HepG2 (cell line): ENCODE measurements at regions of chr6 and their contacts with region 1.

Region 1: DNA sequence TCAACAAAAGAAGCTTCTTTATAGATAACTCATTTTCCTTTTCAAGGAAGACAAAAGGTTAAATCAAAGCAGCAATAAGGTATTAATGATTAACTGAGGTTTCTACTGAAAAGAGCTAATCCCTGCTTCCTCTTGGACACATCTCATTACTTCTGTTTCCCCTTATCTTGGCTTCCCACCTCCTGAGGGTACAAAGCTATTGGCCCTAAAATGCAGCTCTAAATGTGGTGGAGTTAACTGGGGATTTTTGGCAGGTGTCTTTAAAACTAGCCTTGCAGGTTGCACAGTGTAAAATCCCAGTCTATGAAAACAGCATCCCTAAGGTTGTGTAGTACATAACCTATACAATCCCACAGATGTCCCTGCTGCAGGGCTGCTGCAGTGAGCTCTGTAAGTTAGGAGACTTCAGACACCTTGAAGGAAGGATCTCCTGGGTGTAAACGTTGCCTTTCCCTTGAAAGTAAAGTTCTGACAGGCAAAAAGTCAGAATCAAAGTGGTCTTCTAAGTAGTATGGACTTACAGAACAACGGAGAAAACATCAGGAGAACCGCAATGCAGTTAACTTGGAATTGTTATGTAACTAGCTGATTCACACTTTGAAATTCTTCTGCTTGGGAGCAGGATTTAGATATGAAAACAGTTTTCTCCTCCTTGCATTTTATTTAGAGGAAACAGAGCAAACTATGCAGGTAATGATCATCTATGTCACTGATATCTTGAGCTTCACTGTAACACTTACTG is 71.7 kb upstream of the TRAF3IP2 start:
- DNase-seq: peak; percentile 61
- ATAC-seq: peak; percentile 84
- H3K4me3 ChIP-seq: peak overlapping the region; percentile 12 to 43 (median 31); a peak in 4 of 6 replicates
- H3K27ac ChIP-seq: peak overlapping the region; percentile 51
- H3K4me1 ChIP-seq: peaks cover 66% of the 10 kb centered on the region
- H3K27me3 ChIP-seq: no peaks in the 10 kb centered on the region
- CTCF ChIP-seq: no peak
- EP300 ChIP-seq: peak in 1 of 2 experiments; percentile 38; a peak in 1 of 4 replicates
- POLR2A ChIP-seq: peak in 1 of 2 experiments; percentile 55; a peak in 1 of 4 replicates
- RAD21 ChIP-seq: no peak

Region 2: DNA sequence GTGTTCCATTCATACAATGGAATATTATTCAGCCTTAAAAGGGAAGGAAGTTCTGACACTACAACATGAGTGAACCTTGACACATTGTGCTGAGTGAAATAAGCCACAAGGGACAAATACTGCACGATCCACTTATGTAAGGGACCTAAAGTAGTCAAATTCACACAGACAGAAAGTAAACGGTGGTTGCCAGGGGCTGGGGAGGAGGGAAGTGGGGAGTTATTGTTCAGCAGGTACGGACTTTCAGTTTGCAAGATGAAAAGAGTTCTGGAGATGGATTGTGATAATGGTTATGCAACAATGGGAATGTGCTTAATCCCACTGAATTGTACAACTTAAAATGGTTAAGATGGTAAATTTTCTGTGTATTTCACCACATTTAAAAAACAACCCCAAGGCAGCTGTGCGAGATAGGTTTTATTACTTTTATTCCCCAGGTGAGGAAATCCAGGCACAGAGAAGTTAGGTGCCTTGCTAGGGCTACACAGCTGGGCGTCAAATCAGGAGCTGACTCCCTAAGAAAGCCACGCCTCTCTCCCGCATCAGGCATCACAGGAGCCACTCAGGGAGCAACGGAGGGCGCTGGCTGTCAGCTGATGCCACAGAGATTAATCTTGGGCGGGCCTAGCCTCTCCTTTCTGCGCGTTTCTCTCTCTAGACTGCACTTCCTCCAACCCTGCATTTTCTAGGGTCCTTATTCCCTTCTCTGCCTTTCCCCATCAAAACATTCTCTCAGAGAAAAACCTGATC is 62.4 kb before region 1 on chr6:
- CTCF ChIA-PET with region 1: no interaction called
- POLR2A ChIA-PET with region 1: no interaction called
- in situ Hi-C with region 1: no loop called
- intact Hi-C with region 1: loop called (anchors 5 kb)
- DNase-seq: peak; percentile 64
- ATAC-seq: peak; percentile 39
- H3K4me3 ChIP-seq: peak overlapping the region; percentile 22 to 51 (median 49)
- H3K27ac ChIP-seq: no peak overlapping the region
- H3K4me1 ChIP-seq: peaks cover 64% of the 10 kb centered on the region
- H3K27me3 ChIP-seq: no peaks in the 10 kb centered on the region; a peak in 1 of 5 replicates
- CTCF ChIP-seq: no peak
- EP300 ChIP-seq: no peak
- POLR2A ChIP-seq: no peak
- RAD21 ChIP-seq: no peak

Region 3: DNA sequence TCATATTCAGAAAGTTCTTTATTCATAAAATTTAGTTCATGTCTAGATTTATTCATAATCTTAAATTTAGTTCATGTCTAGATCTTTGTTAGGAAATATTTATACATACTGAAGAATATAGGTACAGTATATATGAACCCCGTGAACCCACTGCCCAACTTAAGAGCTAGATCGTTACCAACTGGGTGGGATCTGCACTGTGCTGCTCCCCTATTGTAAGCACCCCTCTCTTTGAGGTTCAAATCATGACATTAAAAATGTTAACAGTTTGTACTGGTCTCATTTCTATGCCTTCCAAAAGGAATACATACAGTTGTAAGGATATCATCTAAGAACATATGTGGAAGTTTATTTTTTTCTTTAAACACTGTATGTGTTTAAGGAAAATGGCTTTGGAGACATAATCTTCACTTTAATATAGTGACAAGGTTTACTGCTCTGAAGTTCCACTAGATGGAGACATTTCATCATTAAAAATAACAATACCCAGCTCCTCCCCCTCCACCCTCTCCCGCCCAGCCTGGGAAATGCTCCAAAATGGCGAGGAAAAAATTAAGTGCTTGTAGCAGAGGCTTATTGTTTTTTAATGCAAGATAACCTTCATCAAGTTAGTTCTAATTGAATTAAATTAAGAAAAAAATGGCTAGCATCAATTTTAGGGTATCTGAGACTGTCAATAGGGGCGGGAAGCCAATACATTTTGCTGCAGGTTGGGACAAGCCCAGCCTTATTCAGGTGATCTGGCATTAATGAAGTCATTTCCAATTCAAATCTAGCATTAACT is 32.4 kb after region 1 on chr6:
- CTCF ChIA-PET with region 1: no interaction called
- POLR2A ChIA-PET with region 1: no interaction called
- in situ Hi-C with region 1: no loop called
- intact Hi-C with region 1: no loop called
- DNase-seq: peak; percentile 68
- ATAC-seq: peak; percentile 97
- H3K4me3 ChIP-seq: no peak overlapping the region
- H3K27ac ChIP-seq: no peak overlapping the region
- H3K4me1 ChIP-seq: no peaks in the 10 kb centered on the region
- H3K27me3 ChIP-seq: no peaks in the 10 kb centered on the region
- CTCF ChIP-seq: peak; percentile 77
- EP300 ChIP-seq: no peak
- POLR2A ChIP-seq: no peak
- RAD21 ChIP-seq: peak; percentile 84